Activated CD8-positive, alpha-beta T cell treated with anti-CD3 and anti-CD28 coated beads, Interleukin-2, amount 10 ng/mL, durations not matched to agents 7 days and 5 days (primary cell): ENCODE measurements at regions of chr6 and their contacts with region 1.

Region 1: GRCh38 chr6:152184917-152185574 is 377.6 kb downstream of the ESR1 start:
- DNase-seq: peak; percentile 41
- ATAC-seq: peak; percentile 78
- H3K4me3 Mint-ChIP-seq: peak overlapping the region; percentile 88
- H3K27ac Mint-ChIP-seq: peak overlapping the region; percentile 99
- H3K4me1 Mint-ChIP-seq: peaks cover 54% of the 10 kb centered on the region
- H3K27me3 Mint-ChIP-seq: no peaks in the 10 kb centered on the region

Region 2: DNA sequence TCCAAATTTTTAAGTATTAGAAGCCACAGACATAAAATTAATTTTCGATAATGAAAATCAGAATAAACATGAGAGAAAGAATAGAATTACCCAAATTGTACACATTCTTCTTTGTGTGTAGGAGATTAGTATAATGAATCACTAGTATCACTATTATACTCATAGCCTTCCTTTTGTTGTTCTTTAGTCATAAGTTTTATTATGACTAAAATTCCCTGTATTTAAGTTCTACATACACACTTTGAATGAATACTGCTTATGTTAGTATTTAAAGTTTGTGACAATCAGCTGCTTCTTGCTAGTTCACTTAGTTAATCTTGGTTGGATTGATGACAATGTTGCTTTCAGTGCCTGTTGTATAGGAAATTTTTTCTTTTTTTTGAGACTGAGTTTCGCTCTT is 618.5 kb before region 1 on chr6:
- CTCF ChIA-PET with region 1: no interaction called
- POLR2A ChIA-PET with region 1: no interaction called
- DNase-seq: no peak
- ATAC-seq: no peak
- H3K4me3 Mint-ChIP-seq: no peak overlapping the region
- H3K27ac Mint-ChIP-seq: no peak overlapping the region
- H3K4me1 Mint-ChIP-seq: no peaks in the 10 kb centered on the region
- H3K27me3 Mint-ChIP-seq: peaks cover 1% of the 10 kb centered on the region

Region 3: GRCh38 chr6:152078804-152079203 is 106.2 kb before region 1 on chr6:
- CTCF ChIA-PET with region 1: no interaction called
- POLR2A ChIA-PET with region 1: no interaction called
- DNase-seq: no peak
- ATAC-seq: no peak
- H3K4me3 Mint-ChIP-seq: no peak overlapping the region
- H3K27ac Mint-ChIP-seq: no peak overlapping the region
- H3K4me1 Mint-ChIP-seq: no peaks in the 10 kb centered on the region
- H3K27me3 Mint-ChIP-seq: peaks cover 6% of the 10 kb centered on the region

Region 4: GRCh38 chr6:152170705-152171667 is 14.1 kb before region 1 on chr6:
- CTCF ChIA-PET with region 1: interaction called, 5 read pairs
- POLR2A ChIA-PET with region 1: interaction called, 25 read pairs
- DNase-seq: peak; percentile 56
- ATAC-seq: peak; percentile 87
- H3K4me3 Mint-ChIP-seq: peak overlapping the region; percentile 9
- H3K27ac Mint-ChIP-seq: peak overlapping the region; percentile 81
- H3K4me1 Mint-ChIP-seq: peaks cover 24% of the 10 kb centered on the region
- H3K27me3 Mint-ChIP-seq: no peaks in the 10 kb centered on the region

Region 5: GRCh38 chr6:152232501-152233151 is 47.6 kb after region 1 on chr6:
- CTCF ChIA-PET with region 1: interaction called, 12 read pairs
- POLR2A ChIA-PET with region 1: interaction called, 14 read pairs
- DNase-seq: peak; percentile 39
- ATAC-seq: peak; percentile 57
- H3K4me3 Mint-ChIP-seq: peak overlapping the region; percentile 65
- H3K27ac Mint-ChIP-seq: peak overlapping the region; percentile 83
- H3K4me1 Mint-ChIP-seq: peaks cover 24% of the 10 kb centered on the region
- H3K27me3 Mint-ChIP-seq: no peaks in the 10 kb centered on the region